PC-3 (cell line): ENCODE measurements at regions of chr18 and their contacts with region 1.

Region 1: DNA sequence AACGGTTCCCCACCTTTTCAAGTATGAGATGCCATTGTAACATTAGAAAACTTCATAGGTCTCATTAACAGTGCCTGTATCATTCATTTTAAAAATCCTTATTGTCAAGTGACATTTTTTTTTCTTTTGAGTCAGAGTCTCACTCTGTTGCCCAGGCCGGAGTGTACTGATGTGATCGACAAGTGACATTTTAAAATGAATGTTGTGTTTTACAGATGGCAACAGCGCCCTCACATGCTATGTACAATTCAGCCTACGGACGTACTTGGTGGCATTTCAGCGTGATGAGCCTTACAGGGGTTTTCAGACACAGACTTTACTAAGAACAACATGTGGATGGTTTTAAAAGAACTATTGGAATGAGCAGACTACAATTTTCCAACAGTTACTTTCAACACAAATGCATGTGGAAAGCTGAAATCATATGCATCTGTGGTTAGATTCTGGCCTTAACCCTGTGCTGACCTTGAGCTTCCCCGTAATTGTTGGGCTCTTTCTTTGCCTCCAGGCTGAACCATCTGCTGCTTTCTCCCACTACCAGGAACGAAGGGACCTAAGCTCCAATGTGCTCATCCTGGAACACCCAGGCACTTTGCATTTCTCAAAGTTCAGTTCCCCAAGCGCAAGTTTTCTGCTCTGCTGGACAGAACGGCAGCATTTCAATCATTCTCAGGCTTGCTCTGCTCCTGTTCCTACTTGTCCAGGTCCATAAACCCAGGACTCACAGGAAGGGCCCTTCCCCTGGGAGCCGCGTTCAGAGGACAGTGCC is 119.9 kb upstream of the NDUFV2 start:
- DNase-seq: peak; percentile 86
- ATAC-seq: peak; percentile 97
- H3K4me3 ChIP-seq: no peak overlapping the region
- H3K27ac ChIP-seq: no peak overlapping the region
- H3K4me1 ChIP-seq: no peaks in the 10 kb centered on the region
- H3K27me3 ChIP-seq: no peaks in the 10 kb centered on the region
- CTCF ChIP-seq: peak; percentile 89

Region 2: DNA sequence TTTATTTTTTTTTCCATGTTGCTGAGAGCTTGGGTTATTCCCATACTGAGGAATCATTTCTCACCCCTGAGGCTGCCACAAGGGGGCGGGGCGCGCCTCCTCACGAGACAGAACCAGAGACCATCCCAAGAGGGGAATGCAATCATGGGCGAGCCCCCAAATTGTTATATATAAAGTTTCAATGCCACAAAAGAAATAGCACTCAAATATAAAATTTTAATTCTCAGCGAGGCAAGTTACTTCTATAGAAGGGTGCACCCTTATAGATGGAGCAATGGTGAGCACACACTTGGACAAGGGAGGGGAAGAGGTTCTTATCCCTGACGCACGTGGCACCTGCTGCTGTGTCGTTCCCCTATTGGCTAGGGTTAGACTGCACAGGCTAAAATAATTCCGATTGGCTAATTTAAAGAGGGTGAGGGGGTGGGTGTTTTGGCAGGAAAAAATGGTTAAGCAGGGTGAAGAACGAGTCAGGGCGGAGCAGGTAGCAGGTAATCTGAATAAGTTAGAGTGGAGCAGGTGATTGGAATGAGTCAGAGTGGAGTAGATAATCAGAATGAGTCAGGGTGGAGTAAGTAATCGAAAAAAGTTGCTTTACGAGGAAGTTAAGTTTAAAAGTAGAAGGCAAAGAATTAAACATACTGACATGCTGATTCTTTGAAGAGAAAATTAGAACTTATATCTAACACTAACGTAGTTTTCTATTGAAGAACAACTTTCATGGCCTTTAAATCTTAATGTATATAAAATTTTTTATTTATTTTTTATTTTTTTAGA is 99.8 kb before region 1 on chr18:
- CTCF ChIA-PET with region 1: no interaction called
- POLR2A ChIA-PET with region 1: no interaction called
- intact Hi-C with region 1: loop called (anchors 1 kb)
- DNase-seq: peak; percentile 93
- ATAC-seq: peak; percentile 89
- H3K4me3 ChIP-seq: no peak overlapping the region
- H3K27ac ChIP-seq: peak overlapping the region; percentile 88
- H3K4me1 ChIP-seq: peaks cover 15% of the 10 kb centered on the region
- H3K27me3 ChIP-seq: no peaks in the 10 kb centered on the region
- CTCF ChIP-seq: peak; percentile 81

Region 3: GRCh38 chr18:8922669-8923068 is 59.9 kb before region 1 on chr18:
- CTCF ChIA-PET with region 1: interaction called, 3 read pairs
- POLR2A ChIA-PET with region 1: no interaction called
- intact Hi-C with region 1: loop called (anchors 5 kb)
- DNase-seq: no peak
- ATAC-seq: no peak
- H3K4me3 ChIP-seq: no peak overlapping the region
- H3K27ac ChIP-seq: no peak overlapping the region
- H3K4me1 ChIP-seq: no peaks in the 10 kb centered on the region
- H3K27me3 ChIP-seq: no peaks in the 10 kb centered on the region
- CTCF ChIP-seq: no peak

Region 4: DNA sequence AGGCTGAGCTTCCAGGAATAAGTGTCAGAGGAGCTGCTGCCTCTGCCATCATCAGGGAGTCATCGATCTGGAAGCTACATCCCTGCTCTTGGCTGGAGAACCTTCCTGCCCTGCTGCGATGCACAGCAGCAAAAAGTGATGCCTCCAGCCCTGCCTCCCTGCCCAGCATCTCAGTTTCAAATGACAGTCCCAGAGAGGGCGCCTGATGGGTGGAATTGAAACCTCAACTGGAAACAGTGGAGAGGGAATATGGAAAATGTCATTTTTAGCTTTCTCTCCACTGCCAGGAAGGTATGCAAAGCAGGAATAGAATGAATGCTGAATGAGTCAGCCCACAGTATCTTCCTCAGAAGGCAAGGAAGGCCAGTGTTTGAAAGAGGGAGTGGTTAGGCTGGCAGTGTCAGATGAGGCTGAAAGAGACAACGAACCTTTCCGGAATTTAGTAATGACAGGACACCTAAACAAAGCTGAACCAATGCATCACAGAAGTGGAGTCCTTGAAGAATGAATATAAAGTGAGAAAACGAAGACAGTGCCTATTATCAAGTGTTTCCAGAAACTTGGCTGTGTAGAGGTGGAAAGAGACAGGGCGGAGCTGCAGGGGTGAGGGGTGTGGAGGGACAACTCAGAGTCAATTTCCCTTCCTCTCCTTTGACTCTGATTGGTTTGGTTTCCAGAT is 34.0 kb before region 1 on chr18:
- CTCF ChIA-PET with region 1: interaction called, 3 read pairs
- POLR2A ChIA-PET with region 1: no interaction called
- intact Hi-C with region 1: loop called (anchors 5 kb)
- DNase-seq: peak; percentile 93
- ATAC-seq: peak; percentile 82
- H3K4me3 ChIP-seq: peak overlapping the region; percentile 44
- H3K27ac ChIP-seq: peak overlapping the region; percentile 50
- H3K4me1 ChIP-seq: peaks cover 71% of the 10 kb centered on the region
- H3K27me3 ChIP-seq: no peaks in the 10 kb centered on the region
- CTCF ChIP-seq: no peak

Region 5: DNA sequence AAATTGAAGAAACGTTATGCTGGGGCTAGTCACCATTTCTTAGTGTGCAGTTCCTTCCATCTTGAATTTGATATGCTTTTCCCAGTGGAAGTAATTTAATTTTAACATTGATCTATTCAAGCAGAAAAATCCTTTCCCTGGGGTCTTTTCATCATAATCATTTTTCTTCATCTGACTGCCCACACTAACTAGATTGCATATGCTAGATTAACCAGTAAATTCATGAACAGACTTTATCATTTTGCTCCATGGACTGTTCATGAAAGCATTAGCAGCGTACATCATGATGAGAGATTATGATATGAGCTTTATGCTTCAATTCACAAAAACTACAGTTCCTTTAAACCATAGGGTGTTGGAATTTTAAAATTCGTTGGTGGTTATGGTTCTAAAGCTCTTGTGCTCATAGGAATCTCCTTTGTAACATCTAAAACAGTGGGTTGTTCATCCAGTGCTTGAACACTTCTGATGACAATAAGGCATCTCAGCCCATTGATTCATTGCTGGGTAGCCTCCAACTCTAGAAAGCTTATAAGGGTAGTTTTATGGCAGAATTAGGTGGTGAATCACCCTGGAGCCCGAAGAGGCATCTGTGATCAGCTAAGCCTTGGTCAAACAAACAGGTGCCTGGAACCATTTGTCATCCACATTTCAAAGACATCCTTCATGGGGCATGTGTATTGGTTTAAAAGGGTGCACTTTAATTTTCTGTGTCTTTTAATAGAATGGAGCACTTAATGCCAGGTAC is 42.7 kb after region 1 on chr18:
- CTCF ChIA-PET with region 1: no interaction called
- POLR2A ChIA-PET with region 1: no interaction called
- intact Hi-C with region 1: no loop called
- DNase-seq: peak; percentile 97
- ATAC-seq: peak; percentile 98
- H3K4me3 ChIP-seq: no peak overlapping the region
- H3K27ac ChIP-seq: no peak overlapping the region
- H3K4me1 ChIP-seq: peaks cover 20% of the 10 kb centered on the region
- H3K27me3 ChIP-seq: no peaks in the 10 kb centered on the region
- CTCF ChIP-seq: no peak